ENCODE measurements at regions of chr6 and their contacts with region 1.

Region 1: GRCh38 chr6:169723200-169723909 is 945 bp downstream of the PHF10 start:
- DNase-seq: peak; percentile 79
- H3K4me3 ChIP-seq: peak overlapping the region; percentile 83
- H3K27ac ChIP-seq: peak overlapping the region; percentile 86
- H3K4me1 ChIP-seq: peaks cover 26% of the 10 kb centered on the region
- CTCF ChIP-seq: no peak

Region 2: GRCh38 chr6:169640351-169640852 is 83.0 kb before region 1 on chr6:
- CTCF ChIA-PET with region 1: no interaction called
- POLR2A ChIA-PET with region 1: no interaction called
- intact Hi-C with region 1: no loop called
- DNase-seq: no peak
- H3K4me3 ChIP-seq: no peak overlapping the region
- H3K27ac ChIP-seq: no peak overlapping the region
- H3K4me1 ChIP-seq: no peaks in the 10 kb centered on the region
- CTCF ChIP-seq: no peak

Region 3: GRCh38 chr6:169701954-169702839 is 21.2 kb before region 1 on chr6 and contains the starts of genes C6orf120 and WDR27:
- CTCF ChIA-PET with region 1: no interaction called
- POLR2A ChIA-PET with region 1: interaction called, 28 read pairs
- intact Hi-C with region 1: loop called (anchors 1 kb)
- DNase-seq: peak; percentile 98
- H3K4me3 ChIP-seq: peak within 1 kb of the TSS; percentile 90
- H3K27ac ChIP-seq: peak within 1 kb of the TSS; percentile 63
- H3K4me1 ChIP-seq: peaks cover 50% of the 10 kb centered on the region
- CTCF ChIP-seq: 0 out of 2 replicates have a peak, but pooled peaks have one; percentile 24
- total RNA-seq, gene C6orf120: 30.3 and 31.0 TPM in 2 replicates
- total RNA-seq, gene WDR27: 69.5 and 77.2 TPM in 2 replicates

Region 4: DNA sequence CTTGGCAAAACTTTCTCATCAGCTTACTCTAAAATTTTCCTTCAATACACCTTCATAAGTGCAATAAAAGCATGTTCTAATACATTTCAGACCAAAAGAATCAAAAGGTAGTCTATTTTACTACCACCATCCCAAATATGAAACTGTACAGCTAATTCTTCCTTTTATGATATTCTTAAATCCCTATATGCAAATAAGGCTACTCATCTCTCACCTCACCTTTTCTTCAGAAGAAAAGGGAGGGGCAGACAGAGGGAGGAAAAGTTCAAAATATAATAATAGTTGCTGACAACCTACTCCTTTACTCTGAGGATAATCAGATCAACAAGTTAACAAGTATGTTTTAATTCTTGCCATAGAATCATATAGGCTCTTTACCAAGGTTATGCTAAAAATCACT is 14.1 kb before region 1 on chr6:
- CTCF ChIA-PET with region 1: no interaction called
- POLR2A ChIA-PET with region 1: interaction called, 37 read pairs
- intact Hi-C with region 1: no loop called
- DNase-seq: no peak
- H3K4me3 ChIP-seq: no peak overlapping the region
- H3K27ac ChIP-seq: no peak overlapping the region
- H3K4me1 ChIP-seq: peaks cover 50% of the 10 kb centered on the region
- CTCF ChIP-seq: no peak

Region 5: GRCh38 chr6:169751242-169752073 is 28.1 kb after region 1 on chr6 and contains the starts of genes DYNLT2 and ERMARD:
- CTCF ChIA-PET with region 1: no interaction called
- POLR2A ChIA-PET with region 1: interaction called, 10 read pairs
- intact Hi-C with region 1: loop called (anchors 1 kb)
- DNase-seq: peak; percentile 95
- H3K4me3 ChIP-seq: peak within 1 kb of the TSS; percentile 81
- H3K27ac ChIP-seq: peak within 1 kb of the TSS; percentile 61
- H3K4me1 ChIP-seq: peaks cover 22% of the 10 kb centered on the region
- CTCF ChIP-seq: 0 out of 2 replicates have a peak, but pooled peaks have one; percentile 23
- total RNA-seq, gene DYNLT2: 7.7 and 10.9 TPM in 2 replicates
- total RNA-seq, gene ERMARD: 16.5 and 23.2 TPM in 2 replicates

Region 6: DNA sequence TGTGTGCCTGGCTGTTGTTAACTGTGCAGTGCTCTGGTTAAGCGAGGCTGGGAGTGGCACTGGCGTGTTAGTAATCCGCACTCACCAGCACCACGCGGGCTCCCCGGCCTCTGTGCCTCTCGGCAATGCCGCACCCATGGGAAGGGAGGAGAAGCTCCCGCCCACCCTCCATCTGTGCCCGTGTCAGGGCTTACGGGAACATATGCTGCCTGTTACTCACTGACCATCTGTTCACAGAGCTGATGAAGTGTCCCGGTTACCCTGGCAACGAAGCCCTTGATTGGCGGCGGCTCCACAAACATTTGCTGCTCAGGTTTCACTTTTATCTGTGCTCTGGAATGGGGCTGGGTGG is 715.0 kb after region 1 on chr6:
- CTCF ChIA-PET with region 1: no interaction called
- POLR2A ChIA-PET with region 1: no interaction called
- intact Hi-C with region 1: no loop called
- DNase-seq: peak; percentile 4
- H3K4me3 ChIP-seq: no peak overlapping the region
- H3K27ac ChIP-seq: no peak overlapping the region
- H3K4me1 ChIP-seq: no peaks in the 10 kb centered on the region
- CTCF ChIP-seq: no peak